ENCODE measurements at regions of chr2 and their contacts with region 1.

Region 1: DNA sequence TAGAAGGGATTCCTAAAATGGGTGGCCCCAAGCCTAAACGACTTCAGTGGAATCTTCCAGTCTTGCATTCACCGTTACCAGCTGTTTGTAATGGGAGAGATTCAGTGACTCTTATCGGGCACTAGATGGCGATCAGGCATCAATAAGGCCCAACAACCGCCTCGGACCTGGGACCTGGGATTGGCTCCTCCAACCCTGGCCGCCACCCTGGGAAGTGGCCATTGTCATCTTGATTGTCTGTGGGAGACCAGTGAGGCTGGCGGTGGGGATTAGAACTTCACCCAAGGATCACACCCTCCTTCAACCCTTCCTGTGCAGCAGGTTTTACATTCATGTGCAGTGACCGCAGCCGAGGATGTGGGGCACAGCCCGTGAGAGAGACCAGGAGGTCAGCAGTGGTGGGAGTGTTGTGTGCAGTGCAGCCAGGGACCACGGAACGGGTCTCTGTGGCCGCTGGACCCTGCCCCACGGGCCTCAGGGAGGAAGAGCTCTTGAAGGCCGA is 85.3 kb downstream of the SPP2 start:
- DNase-seq: peak; percentile 64
- ATAC-seq: peak; percentile 97
- H3K4me3 ChIP-seq: no peak overlapping the region
- H3K27ac ChIP-seq: no peak overlapping the region
- H3K4me1 ChIP-seq: no peaks in the 10 kb centered on the region
- H3K27me3 ChIP-seq: no peaks in the 10 kb centered on the region; a peak in 1 of 5 replicates
- CTCF ChIP-seq: peak; percentile 95
- EP300 ChIP-seq: no peak
- POLR2A ChIP-seq: no peak
- RAD21 ChIP-seq: peak; percentile 83

Region 2: DNA sequence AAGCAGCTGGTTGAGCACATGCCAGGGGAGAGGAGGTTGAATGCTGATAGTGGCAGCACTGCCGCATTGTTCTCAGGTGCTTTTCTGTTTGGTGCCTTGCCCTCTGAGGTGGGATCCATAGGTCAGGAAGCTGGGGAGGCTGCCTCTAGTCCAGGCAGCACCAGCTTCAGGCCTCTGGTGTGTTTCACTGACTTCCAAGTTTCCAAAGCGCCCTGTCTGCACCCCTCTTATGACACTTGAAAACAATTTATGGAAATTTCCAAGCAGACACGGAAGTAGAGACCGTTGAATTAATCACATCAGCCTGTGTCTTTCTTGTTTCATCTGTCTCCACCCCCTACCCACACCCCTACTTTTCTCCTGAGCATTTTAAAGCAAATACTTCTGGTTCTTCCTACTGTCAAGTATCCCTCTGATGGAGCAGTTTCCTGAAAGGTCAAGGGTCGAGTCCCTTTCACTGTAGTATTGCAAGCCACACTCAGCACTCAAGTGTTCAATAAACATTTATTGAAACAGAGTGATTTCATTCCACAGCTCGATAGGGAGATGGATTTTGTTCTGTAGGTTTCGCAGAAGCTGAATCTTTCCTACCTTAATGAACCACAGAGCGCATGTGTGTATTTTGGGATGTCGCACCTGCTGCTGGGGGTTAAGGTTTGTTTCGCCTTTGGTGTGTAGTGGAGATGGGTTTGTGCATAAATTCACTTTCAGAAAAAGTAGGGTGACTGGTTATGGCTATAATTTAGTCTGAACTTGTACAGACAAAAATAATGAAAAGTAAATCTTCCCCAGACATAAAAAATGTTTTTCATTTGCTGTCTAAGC is 760.1 kb before region 1 on chr2:
- CTCF ChIA-PET with region 1: no interaction called
- POLR2A ChIA-PET with region 1: no interaction called
- in situ Hi-C with region 1: no loop called
- intact Hi-C with region 1: no loop called
- DNase-seq: no peak
- ATAC-seq: peak; percentile 50
- H3K4me3 ChIP-seq: no peak overlapping the region
- H3K27ac ChIP-seq: no peak overlapping the region
- H3K4me1 ChIP-seq: peaks cover 26% of the 10 kb centered on the region
- H3K27me3 ChIP-seq: no peaks in the 10 kb centered on the region
- CTCF ChIP-seq: no peak
- EP300 ChIP-seq: no peak
- POLR2A ChIP-seq: no peak
- RAD21 ChIP-seq: no peak

Region 3: GRCh38 chr2:233404222-233404621 is 731.5 kb before region 1 on chr2:
- CTCF ChIA-PET with region 1: no interaction called
- POLR2A ChIA-PET with region 1: no interaction called
- in situ Hi-C with region 1: no loop called
- intact Hi-C with region 1: loop called (anchors 5 kb)
- DNase-seq: peak; percentile 48
- ATAC-seq: peak; percentile 76
- H3K4me3 ChIP-seq: no peak overlapping the region
- H3K27ac ChIP-seq: no peak overlapping the region
- H3K4me1 ChIP-seq: no peaks in the 10 kb centered on the region
- H3K27me3 ChIP-seq: no peaks in the 10 kb centered on the region
- CTCF ChIP-seq: peak; percentile 69
- EP300 ChIP-seq: no peak
- POLR2A ChIP-seq: no peak
- RAD21 ChIP-seq: no peak

Region 4: DNA sequence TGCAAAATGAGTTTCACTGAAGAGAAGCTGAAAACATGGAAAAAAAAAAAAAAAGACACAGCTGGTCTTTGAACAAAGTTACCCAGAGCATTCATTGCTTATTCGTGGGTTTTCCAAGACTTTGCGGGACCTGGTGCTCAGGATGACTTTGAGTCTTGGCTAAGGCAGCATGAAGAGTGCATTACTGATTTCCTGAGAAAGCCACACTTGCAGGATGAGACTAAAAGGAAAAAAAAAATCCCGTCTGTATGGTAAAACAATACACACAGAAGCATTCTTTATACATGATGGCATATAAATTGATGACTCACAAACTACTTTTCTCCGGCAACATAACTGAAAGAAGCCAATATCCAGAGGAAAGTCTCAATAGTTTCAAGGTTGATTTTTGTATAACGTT is 110.2 kb after region 1 on chr2:
- CTCF ChIA-PET with region 1: no interaction called
- POLR2A ChIA-PET with region 1: no interaction called
- in situ Hi-C with region 1: loop called (anchors 5 kb)
- intact Hi-C with region 1: no loop called
- DNase-seq: no peak
- ATAC-seq: no peak
- H3K4me3 ChIP-seq: no peak overlapping the region
- H3K27ac ChIP-seq: no peak overlapping the region
- H3K4me1 ChIP-seq: no peaks in the 10 kb centered on the region
- H3K27me3 ChIP-seq: no peaks in the 10 kb centered on the region
- CTCF ChIP-seq: no peak
- EP300 ChIP-seq: no peak
- POLR2A ChIP-seq: no peak
- RAD21 ChIP-seq: no peak

Region 5: DNA sequence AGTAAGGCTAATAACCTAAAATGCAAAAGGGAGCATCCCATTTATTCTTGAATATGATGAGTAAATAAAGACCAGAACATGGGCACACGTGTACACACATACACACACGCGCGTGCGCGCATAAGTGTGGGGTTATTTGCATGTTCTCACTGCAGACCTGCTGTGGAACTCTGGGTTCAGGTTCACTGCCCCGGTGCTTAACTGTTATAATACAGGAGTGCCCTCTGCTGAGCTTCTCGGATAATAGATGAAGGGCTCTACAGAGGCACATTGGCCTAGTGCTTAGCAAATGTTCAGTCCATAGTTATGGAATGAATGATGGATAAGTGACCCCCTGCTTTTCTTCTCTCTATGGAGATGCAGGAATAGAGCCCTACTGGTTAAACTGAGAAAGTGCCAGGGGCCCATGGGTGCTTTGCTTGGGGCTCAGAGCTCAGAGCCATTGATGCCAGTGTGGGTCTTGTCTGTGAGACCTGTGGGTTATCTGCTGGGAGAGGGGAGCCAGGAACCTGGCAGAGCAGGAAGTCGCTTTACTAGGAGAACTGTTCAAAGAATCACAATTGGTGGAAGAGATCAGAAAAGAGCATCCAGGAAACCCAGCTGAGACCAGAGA is 364.7 kb after region 1 on chr2:
- CTCF ChIA-PET with region 1: interaction called, 4 read pairs
- POLR2A ChIA-PET with region 1: no interaction called
- in situ Hi-C with region 1: loop called (anchors 5 kb)
- intact Hi-C with region 1: loop called (anchors 1 kb)
- DNase-seq: peak; percentile 66
- ATAC-seq: peak; percentile 75
- H3K4me3 ChIP-seq: no peak overlapping the region
- H3K27ac ChIP-seq: no peak overlapping the region
- H3K4me1 ChIP-seq: peaks cover 7% of the 10 kb centered on the region
- H3K27me3 ChIP-seq: peaks cover 9 to 14% of the 10 kb centered on the region in 2 experiments
- CTCF ChIP-seq: peak; percentile 81
- EP300 ChIP-seq: no peak
- POLR2A ChIP-seq: no peak
- RAD21 ChIP-seq: peak; percentile 86

Region 6: DNA sequence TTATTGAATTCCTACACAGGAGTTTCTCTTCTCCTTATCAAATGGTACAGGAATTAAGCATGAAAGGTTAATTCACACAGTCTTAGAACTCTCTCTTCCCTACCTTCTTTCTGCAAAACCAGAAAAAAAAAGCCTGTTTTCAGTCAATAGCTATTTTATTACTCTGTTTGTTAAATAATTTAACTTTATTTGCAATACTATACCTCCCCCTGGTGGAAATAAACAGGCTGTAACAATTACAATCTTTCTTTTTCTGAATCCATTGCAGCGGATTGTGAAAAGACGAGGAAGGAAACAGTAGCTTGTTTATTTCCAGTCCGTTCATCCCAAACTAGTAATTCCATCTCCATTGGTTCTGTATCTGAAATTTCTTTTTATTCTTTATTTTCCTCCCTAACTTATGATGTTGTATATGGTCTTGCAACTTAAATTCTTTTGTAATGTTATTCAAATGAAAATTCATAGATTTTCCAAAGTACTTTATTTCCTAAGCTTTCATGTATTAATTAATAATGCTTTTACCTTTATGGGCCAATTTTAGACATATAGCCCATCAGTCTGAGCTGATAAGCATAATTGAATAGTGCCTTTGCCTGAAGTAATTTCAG is 981.2 kb after region 1 on chr2:
- CTCF ChIA-PET with region 1: interaction called, 15 read pairs
- POLR2A ChIA-PET with region 1: no interaction called
- in situ Hi-C with region 1: loop called (anchors 10 kb)
- intact Hi-C with region 1: loop called (anchors 1 kb)
- DNase-seq: peak; percentile 50
- ATAC-seq: no peak
- H3K4me3 ChIP-seq: no peak overlapping the region
- H3K27ac ChIP-seq: no peak overlapping the region
- H3K4me1 ChIP-seq: no peaks in the 10 kb centered on the region
- H3K27me3 ChIP-seq: peaks cover 0 to 11% of the 10 kb centered on the region in 2 experiments; a peak in 2 of 5 replicates
- CTCF ChIP-seq: peak; percentile 63
- EP300 ChIP-seq: no peak
- POLR2A ChIP-seq: no peak
- RAD21 ChIP-seq: peak; percentile 68

Measured in HepG2 (cell line).